MCF 10A (cell line): ENCODE measurements at regions of chr7 and their contacts with region 1.

Region 1: GRCh38 chr7:7489546-7489945 is 46.1 kb downstream of the COL28A1 start:
- DNase-seq: peak; percentile 67
- H3K4me3 Mint-ChIP-seq: peak overlapping the region; percentile 1
- H3K27ac Mint-ChIP-seq: peak overlapping the region; percentile 71
- H3K4me1 Mint-ChIP-seq: peaks cover 27% of the 10 kb centered on the region
- H3K27me3 Mint-ChIP-seq: no peaks in the 10 kb centered on the region
- CTCF ChIP-seq: no peak

Region 2: DNA sequence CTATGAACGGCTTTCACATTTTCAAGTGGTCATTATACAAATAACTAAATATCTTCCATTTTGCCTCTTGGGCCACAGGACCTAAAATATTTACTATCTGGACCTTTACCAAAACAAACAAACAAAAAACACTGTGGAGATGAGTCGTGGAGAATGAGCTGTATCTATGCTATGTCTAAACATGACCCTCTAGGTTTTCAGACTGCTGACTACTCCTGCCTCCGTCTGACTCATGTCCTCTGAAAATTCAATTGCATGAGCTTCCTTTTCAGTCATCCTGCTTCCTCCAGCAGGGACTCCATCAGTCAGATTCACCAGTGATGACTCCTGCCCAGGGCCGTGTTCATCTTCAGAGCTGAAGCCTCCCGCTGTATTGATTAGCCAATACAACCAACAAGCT is 50.7 kb before region 1 on chr7:
- CTCF ChIA-PET with region 1: interaction called, 4 read pairs
- POLR2A ChIA-PET with region 1: interaction called, 76 read pairs
- intact Hi-C with region 1: loop called (anchors 1 kb)
- DNase-seq: peak; percentile 95
- H3K4me3 Mint-ChIP-seq: peak overlapping the region; percentile 36
- H3K27ac Mint-ChIP-seq: peak overlapping the region; percentile 88
- H3K4me1 Mint-ChIP-seq: peaks cover 13% of the 10 kb centered on the region
- H3K27me3 Mint-ChIP-seq: no peaks in the 10 kb centered on the region
- CTCF ChIP-seq: no peak

Region 3: GRCh38 chr7:7443806-7444350 is 45.7 kb before region 1 on chr7:
- CTCF ChIA-PET with region 1: interaction called, 6 read pairs
- POLR2A ChIA-PET with region 1: interaction called, 76 read pairs
- intact Hi-C with region 1: loop called (anchors 1 kb)
- DNase-seq: no peak
- H3K4me3 Mint-ChIP-seq: no peak overlapping the region
- H3K27ac Mint-ChIP-seq: no peak overlapping the region
- H3K4me1 Mint-ChIP-seq: peaks cover 16% of the 10 kb centered on the region
- H3K27me3 Mint-ChIP-seq: no peaks in the 10 kb centered on the region
- CTCF ChIP-seq: no peak

Region 4: DNA sequence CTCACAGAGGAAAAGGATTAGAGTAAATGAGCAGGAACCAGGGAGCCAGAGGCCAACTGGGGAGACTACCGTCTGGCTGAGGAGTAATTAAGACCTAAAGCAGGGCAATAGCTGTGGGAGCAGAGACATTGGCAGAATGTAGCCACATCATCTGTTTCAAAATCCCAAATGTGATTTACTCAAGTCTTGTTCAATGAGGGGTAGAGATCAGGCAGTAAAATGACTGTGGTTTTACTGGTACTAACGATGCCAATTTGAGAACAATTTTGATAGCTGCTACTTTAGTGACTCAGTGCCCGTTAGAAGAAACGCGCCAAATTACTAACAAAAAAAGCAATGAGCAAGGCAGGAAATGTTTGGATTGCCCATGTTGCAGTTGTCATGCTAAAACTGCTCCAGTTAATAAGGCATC is 64.5 kb after region 1 on chr7:
- CTCF ChIA-PET with region 1: no interaction called
- POLR2A ChIA-PET with region 1: interaction called, 20 read pairs
- intact Hi-C with region 1: no loop called
- DNase-seq: peak; percentile 86
- H3K4me3 Mint-ChIP-seq: peak overlapping the region; percentile 58
- H3K27ac Mint-ChIP-seq: peak overlapping the region; percentile 98
- H3K4me1 Mint-ChIP-seq: peaks cover 44% of the 10 kb centered on the region
- H3K27me3 Mint-ChIP-seq: no peaks in the 10 kb centered on the region
- CTCF ChIP-seq: no peak